Esophagus muscularis mucosa (tissue), 4 donors: ENCODE measurements at regions of chr5 and their contacts with region 1.

Region 1: GRCh38 chr5:132272311-132273210 is 15.1 kb downstream of the PDLIM4 start:
- DNase-seq: no peak
- H3K4me3 ChIP-seq: no peak overlapping the region
- H3K27ac ChIP-seq: peak overlapping the region; percentile 19 to 100 (median 44)
- H3K4me1 ChIP-seq: peaks cover 6 to 57% (median 44%) of the 10 kb centered on the region in 4 donors
- H3K27me3 ChIP-seq: no peaks in the 10 kb centered on the region
- CTCF ChIP-seq: peak; percentile 78 to 87 (median 85)
- EP300 ChIP-seq: no peak
- POLR2A ChIP-seq: no peak

Region 2: DNA sequence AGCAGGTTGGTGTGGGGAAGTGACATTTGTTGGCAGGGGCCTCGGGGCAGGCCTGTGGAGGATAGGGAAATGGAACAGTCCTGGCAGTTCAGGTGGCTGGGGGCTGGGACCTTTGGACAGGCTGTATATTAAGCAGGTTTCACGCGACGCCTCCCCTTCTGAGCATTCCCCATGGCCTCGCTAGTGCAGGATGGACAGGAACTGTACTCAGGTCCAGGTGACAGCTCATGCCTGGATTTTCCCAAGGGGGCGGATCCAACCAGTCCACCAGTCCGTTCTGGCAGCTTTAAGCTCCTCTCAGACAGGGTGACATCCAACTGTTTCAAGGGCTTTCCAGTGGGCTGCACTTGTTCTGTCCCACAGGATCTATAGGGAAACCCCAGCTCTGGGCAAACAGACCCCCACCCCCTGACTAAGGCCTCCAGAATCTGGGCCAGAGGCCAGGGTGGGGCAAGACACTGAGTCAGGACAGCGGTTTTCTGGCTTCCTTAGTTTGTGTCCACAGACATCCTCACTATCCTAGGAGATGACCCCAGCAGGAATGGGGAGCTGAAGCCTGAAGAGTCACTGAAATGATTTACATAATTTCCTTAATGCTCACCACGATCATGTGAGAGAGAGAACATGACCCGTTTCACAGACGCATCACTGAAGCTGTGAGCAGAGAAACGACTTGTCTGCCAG is 178.0 kb before region 1 on chr5:
- intact Hi-C with region 1: no loop called
- DNase-seq: no peak
- H3K4me3 ChIP-seq: no peak overlapping the region
- H3K27ac ChIP-seq: no peak overlapping the region
- H3K4me1 ChIP-seq: no peaks in the 10 kb centered on the region
- H3K27me3 ChIP-seq: no peaks in the 10 kb centered on the region
- CTCF ChIP-seq: no peak
- EP300 ChIP-seq: no peak
- POLR2A ChIP-seq: no peak

Region 3: GRCh38 chr5:132190161-132190817 is 82.3 kb before region 1 on chr5:
- intact Hi-C with region 1: no loop called
- DNase-seq: peak; percentile 77
- H3K4me3 ChIP-seq: no peak overlapping the region
- H3K27ac ChIP-seq: no peak overlapping the region
- H3K4me1 ChIP-seq: no peaks in the 10 kb centered on the region
- H3K27me3 ChIP-seq: no peaks in the 10 kb centered on the region
- CTCF ChIP-seq: peak; percentile 60 to 82 (median 66)
- EP300 ChIP-seq: no peak
- POLR2A ChIP-seq: no peak

Region 4: GRCh38 chr5:132238169-132238744 is 34.3 kb before region 1 on chr5:
- intact Hi-C with region 1: loop called (anchors 5 kb)
- DNase-seq: no peak
- H3K4me3 ChIP-seq: no peak overlapping the region
- H3K27ac ChIP-seq: no peak overlapping the region
- H3K4me1 ChIP-seq: peaks cover 0 to 7% (median 0%) of the 10 kb centered on the region in 4 donors
- H3K27me3 ChIP-seq: no peaks in the 10 kb centered on the region
- CTCF ChIP-seq: peak; percentile 76 to 91 (median 83)
- EP300 ChIP-seq: no peak
- POLR2A ChIP-seq: no peak